ENCODE measurements at regions of chr18 and their contacts with region 1.

Region 1: GRCh38 chr18:11149441-11150270 is at the start of gene PIEZO2:
- DNase-seq: peak; percentile 44
- ATAC-seq: peak; percentile 42
- H3K4me3 Mint-ChIP-seq: no peak within 1 kb of the TSS
- H3K27ac Mint-ChIP-seq: no peak within 1 kb of the TSS
- H3K4me1 Mint-ChIP-seq: peaks cover 5% of the 10 kb centered on the region
- H3K27me3 Mint-ChIP-seq: peaks cover 34% of the 10 kb centered on the region
- total RNA-seq, gene PIEZO2: not detected

Region 2: DNA sequence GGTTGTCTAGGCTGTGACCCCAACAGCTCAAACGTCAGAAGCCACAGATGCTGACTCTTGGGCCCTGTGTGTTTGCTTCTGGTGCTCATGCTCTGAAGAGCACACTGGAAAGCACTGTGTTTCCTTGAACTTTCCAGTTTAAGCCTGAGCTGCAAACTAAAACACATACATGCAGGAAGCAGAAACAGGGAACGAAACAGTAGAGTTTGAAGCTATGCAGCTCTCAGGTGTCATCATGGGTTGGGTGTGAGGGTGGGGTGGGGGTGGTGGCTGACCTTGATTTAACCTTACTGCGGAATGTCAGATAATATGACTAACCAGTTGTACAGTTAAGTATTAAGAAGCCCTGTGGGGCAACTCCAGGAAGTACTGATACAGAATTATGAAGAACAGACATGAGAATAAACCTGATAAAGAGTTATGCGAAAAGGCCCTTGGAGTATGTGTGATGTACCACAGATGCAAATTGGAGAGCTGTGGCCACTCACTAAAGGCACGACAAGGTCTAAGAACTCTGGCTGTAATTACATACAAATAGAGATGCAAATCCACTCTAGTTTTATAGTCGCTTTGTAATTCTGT is 350.8 kb before region 1 on chr18:
- CTCF ChIA-PET with region 1: no interaction called
- POLR2A ChIA-PET with region 1: no interaction called
- intact Hi-C with region 1: no loop called
- DNase-seq: no peak
- ATAC-seq: no peak
- H3K4me3 Mint-ChIP-seq: no peak overlapping the region
- H3K27ac Mint-ChIP-seq: no peak overlapping the region
- H3K4me1 Mint-ChIP-seq: no peaks in the 10 kb centered on the region
- H3K27me3 Mint-ChIP-seq: peaks cover 5% of the 10 kb centered on the region

Region 3: DNA sequence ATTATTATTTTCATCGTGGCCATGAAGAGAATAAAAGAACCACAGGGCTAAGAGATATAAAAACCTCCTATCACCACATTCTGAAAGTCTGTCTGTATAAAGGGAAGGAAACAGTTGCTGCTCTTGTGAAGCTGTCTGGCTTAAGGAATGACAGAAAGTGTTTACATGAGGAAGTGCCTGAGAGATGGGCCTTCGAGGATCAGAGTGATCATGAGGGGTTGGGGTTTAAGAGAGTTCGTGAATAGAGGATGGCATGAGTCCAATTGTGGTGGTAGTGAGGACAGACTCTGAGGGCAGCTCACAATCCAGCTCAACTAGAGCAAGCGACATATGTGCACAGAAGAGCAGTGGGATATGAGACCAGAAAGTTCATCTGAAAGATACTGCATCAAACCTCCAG is 65.6 kb after region 1 on chr18:
- CTCF ChIA-PET with region 1: no interaction called
- POLR2A ChIA-PET with region 1: no interaction called
- intact Hi-C with region 1: loop called in 1 of 2 experiments (anchors 10 kb)
- DNase-seq: no peak
- ATAC-seq: no peak
- H3K4me3 Mint-ChIP-seq: no peak overlapping the region
- H3K27ac Mint-ChIP-seq: no peak overlapping the region
- H3K4me1 Mint-ChIP-seq: no peaks in the 10 kb centered on the region
- H3K27me3 Mint-ChIP-seq: peaks cover 3% of the 10 kb centered on the region